ENCODE measurements at regions of chr15 and their contacts with region 1.

Region 1: DNA sequence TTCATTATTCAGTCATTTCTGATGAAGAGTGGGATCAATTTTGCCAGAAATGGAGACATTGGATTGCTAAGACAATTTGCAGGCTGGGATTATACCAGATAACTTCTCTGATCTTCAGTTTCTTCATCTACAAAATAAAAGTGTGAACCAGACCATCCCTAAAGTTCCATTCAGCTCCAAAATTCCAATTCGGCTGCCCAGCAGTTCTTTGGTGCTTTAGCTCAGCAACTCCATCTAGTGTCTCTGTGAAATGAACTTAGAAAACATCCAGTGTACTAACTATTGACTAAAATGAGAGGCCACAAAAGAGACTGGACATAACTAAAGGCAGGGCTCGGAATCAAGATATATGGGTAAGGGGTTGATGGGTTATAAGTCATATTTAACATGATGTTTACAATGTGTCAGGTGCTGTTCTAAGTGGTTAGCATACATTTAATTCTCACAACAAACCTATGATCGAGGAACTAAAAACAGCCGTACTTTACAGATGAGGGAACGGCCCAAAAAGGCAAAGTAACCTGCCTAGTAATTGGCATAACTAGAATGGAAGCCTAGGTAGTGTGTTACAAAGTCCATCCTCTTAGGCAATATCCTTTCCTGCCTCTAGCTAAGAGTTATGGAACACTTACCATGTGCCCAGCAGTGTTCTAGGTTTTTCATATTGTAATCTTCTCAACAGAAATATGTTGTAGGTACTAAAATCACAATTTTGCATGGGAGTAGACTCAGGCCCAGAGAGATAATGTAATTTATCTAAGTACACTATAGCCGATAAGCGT is 17.0 kb downstream of the THAP10 start:
- DNase-seq: no peak
- H3K4me3 ChIP-seq: no peak overlapping the region
- H3K27ac ChIP-seq: no peak overlapping the region
- H3K4me1 ChIP-seq: no peaks in the 10 kb centered on the region
- H3K27me3 ChIP-seq: no peaks in the 10 kb centered on the region
- CTCF ChIP-seq: peak; percentile 61

Region 2: GRCh38 chr15:70679919-70680231 is 195.3 kb before region 1 on chr15:
- CTCF ChIA-PET with region 1: no interaction called
- POLR2A ChIA-PET with region 1: no interaction called
- intact Hi-C with region 1: loop called (anchors 2 kb)
- DNase-seq: no peak
- H3K4me3 ChIP-seq: no peak overlapping the region
- H3K27ac ChIP-seq: no peak overlapping the region
- H3K4me1 ChIP-seq: no peaks in the 10 kb centered on the region
- H3K27me3 ChIP-seq: no peaks in the 10 kb centered on the region
- CTCF ChIP-seq: 0 out of 2 replicates have a peak, but pooled peaks have one; percentile 1

Region 3: GRCh38 chr15:70826634-70827033 is 48.6 kb before region 1 on chr15:
- CTCF ChIA-PET with region 1: interaction called, 5 read pairs
- POLR2A ChIA-PET with region 1: no interaction called
- intact Hi-C with region 1: loop called (anchors 10 kb)
- DNase-seq: peak; percentile 40 to 80
- H3K4me3 ChIP-seq: no peak overlapping the region
- H3K27ac ChIP-seq: peak overlapping the region; percentile 90
- H3K4me1 ChIP-seq: peaks cover 30% of the 10 kb centered on the region
- H3K27me3 ChIP-seq: no peaks in the 10 kb centered on the region
- CTCF ChIP-seq: no peak

Region 4: GRCh38 chr15:70833897-70834765 is 41.1 kb before region 1 on chr15:
- CTCF ChIA-PET with region 1: interaction called, 21 read pairs
- POLR2A ChIA-PET with region 1: no interaction called
- intact Hi-C with region 1: loop called (anchors 10 kb)
- DNase-seq: peak; percentile 75 to 81
- H3K4me3 ChIP-seq: no peak overlapping the region
- H3K27ac ChIP-seq: peak overlapping the region; percentile 96
- H3K4me1 ChIP-seq: peaks cover 24% of the 10 kb centered on the region
- H3K27me3 ChIP-seq: no peaks in the 10 kb centered on the region
- CTCF ChIP-seq: no peak

Measured in PC-9 (cell line).